IMR-90 (cell line): ENCODE measurements at regions of chr11 and their contacts with region 1.

Region 1: GRCh38 chr11:75839851-75840250 is 24.8 kb downstream of the UVRAG start:
- DNase-seq: no peak
- ATAC-seq: no peak
- H3K4me3 ChIP-seq: no peak overlapping the region
- H3K27ac ChIP-seq: no peak overlapping the region
- H3K4me1 ChIP-seq: no peaks in the 10 kb centered on the region
- H3K27me3 ChIP-seq: no peaks in the 10 kb centered on the region
- CTCF ChIP-seq: no peak
- POLR2A ChIP-seq: no peak
- RAD21 ChIP-seq: no peak

Region 2: GRCh38 chr11:75697906-75698563 is 141.8 kb before region 1 on chr11:
- CTCF ChIA-PET with region 1: no interaction called
- POLR2A ChIA-PET with region 1: no interaction called
- dilution Hi-C with region 1: no loop called
- in situ Hi-C with region 1: no loop called
- intact Hi-C with region 1: no loop called
- DNase-seq: no peak
- ATAC-seq: no peak
- H3K4me3 ChIP-seq: no peak overlapping the region
- H3K27ac ChIP-seq: no peak overlapping the region
- H3K4me1 ChIP-seq: no peaks in the 10 kb centered on the region
- H3K27me3 ChIP-seq: peaks cover 22% of the 10 kb centered on the region
- CTCF ChIP-seq: no peak
- POLR2A ChIP-seq: no peak
- RAD21 ChIP-seq: no peak

Region 3: DNA sequence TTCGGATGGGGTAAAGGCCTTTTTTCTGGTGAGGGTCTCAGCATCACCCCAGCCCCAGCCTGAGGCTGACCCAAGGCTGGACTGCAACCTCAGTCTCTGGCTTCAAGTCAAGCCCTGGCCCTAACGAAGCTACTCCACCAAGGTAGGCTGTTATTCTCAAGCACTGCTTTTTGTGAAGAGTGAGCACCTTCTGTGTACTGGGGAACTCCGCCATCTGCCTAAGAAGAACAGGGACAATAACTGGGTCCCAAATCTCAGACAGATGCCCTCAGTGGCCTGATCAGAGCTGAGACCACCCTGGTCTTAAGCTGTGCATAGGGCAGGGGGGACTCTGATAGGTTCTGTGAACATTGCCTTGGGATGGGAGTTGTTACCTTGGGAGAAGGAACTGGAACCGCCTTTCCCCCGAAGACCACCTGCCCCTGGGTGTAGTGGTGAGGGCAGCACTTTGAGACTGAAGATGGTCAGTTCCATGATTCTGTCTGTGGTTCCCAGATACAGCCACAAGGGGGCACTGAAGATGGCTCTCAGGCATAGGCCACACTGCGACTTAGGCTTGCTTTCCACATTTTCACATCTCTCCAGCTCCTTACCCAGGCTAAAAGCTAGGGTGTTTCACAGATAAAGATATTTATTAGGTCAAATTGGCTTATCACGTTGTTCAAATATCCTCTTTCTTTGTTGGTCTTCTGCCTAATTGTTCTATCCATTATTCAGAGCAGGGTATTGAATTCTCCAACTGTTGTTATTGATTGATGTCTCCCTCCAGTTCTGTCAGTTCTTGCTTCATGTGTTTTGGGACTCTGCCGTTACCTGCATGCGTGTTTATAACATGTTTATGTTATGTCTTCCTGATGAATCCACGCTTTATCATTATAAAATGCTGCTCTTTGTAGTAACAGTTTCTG is 36.7 kb before region 1 on chr11:
- CTCF ChIA-PET with region 1: no interaction called
- POLR2A ChIA-PET with region 1: no interaction called
- dilution Hi-C with region 1: no loop called
- in situ Hi-C with region 1: no loop called
- intact Hi-C with region 1: no loop called
- DNase-seq: peak; percentile 65
- ATAC-seq: peak; percentile 99
- H3K4me3 ChIP-seq: no peak overlapping the region
- H3K27ac ChIP-seq: no peak overlapping the region
- H3K4me1 ChIP-seq: no peaks in the 10 kb centered on the region
- H3K27me3 ChIP-seq: no peaks in the 10 kb centered on the region
- CTCF ChIP-seq: peak; percentile 91
- POLR2A ChIP-seq: no peak
- RAD21 ChIP-seq: peak; percentile 88

Region 4: DNA sequence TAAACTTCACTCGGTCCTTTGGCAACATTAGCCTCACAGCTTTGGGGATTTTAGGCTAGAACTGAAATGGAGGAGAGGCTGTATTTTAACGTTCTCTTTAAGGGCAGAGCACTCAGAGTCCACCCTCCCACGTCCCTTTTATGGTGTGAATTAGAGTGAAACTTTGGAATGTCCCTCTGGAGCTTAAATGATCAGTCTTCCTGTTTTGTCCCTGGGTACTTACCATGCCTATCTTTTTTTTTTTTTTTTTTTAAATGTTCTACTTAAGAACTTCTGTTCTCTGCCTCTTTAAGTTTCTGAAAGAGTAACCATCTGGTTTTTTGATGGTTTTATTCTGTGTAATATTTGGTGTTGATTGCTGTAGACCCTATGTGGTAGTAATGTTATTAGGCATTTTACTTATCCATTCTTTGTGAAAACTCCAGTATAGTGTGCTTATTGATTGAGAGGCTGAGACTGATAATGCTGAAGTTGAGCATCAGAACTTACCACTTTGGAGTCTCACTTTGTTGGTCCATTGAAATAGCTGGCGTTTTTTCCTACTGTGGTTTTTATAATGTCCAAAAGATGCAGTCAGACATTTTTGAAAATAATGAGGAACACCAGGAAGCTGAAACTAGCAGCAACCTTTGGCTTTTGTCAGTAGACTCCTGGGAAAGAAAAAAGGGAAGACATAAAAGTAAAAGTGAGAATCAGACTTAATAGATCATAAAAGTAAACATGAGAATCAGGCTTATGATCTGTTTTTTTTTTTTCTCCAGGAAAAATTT is 13.2 kb before region 1 on chr11:
- CTCF ChIA-PET with region 1: interaction called, 3 read pairs
- POLR2A ChIA-PET with region 1: no interaction called
- dilution Hi-C with region 1: no loop called
- in situ Hi-C with region 1: no loop called
- intact Hi-C with region 1: loop called (anchors 2 kb)
- DNase-seq: peak; percentile 23
- ATAC-seq: peak; percentile 21; the same call in 1 of the 2 replicates
- H3K4me3 ChIP-seq: no peak overlapping the region
- H3K27ac ChIP-seq: no peak overlapping the region
- H3K4me1 ChIP-seq: peaks cover 6% of the 10 kb centered on the region
- H3K27me3 ChIP-seq: no peaks in the 10 kb centered on the region
- CTCF ChIP-seq: no peak
- POLR2A ChIP-seq: no peak
- RAD21 ChIP-seq: no peak